MCF 10A (cell line): ENCODE measurements at regions of chr22 and their contacts with region 1.

Region 1: GRCh38 chr22:39502109-39502788 is at the start of gene MIEF1:
- DNase-seq: peak; percentile 96
- H3K4me3 Mint-ChIP-seq: peak within 1 kb of the TSS; percentile 79
- H3K27ac Mint-ChIP-seq: peak within 1 kb of the TSS; percentile 59
- H3K4me1 Mint-ChIP-seq: peaks cover 24% of the 10 kb centered on the region
- H3K27me3 Mint-ChIP-seq: no peaks in the 10 kb centered on the region
- CTCF ChIP-seq: no peak
- total RNA-seq, gene MIEF1: 37.0 and 40.2 TPM in 2 replicates

Region 2: GRCh38 chr22:39456262-39457197 is 45.7 kb before region 1 on chr22 and contains the start of gene MGAT3:
- CTCF ChIA-PET with region 1: no interaction called
- POLR2A ChIA-PET with region 1: no interaction called
- intact Hi-C with region 1: no loop called
- DNase-seq: no peak
- H3K4me3 Mint-ChIP-seq: no peak within 1 kb of the TSS
- H3K27ac Mint-ChIP-seq: no peak within 1 kb of the TSS
- H3K4me1 Mint-ChIP-seq: no peaks in the 10 kb centered on the region
- H3K27me3 Mint-ChIP-seq: peaks cover 28% of the 10 kb centered on the region
- CTCF ChIP-seq: no peak
- total RNA-seq, gene MGAT3: not detected in 2 replicates

Region 3: DNA sequence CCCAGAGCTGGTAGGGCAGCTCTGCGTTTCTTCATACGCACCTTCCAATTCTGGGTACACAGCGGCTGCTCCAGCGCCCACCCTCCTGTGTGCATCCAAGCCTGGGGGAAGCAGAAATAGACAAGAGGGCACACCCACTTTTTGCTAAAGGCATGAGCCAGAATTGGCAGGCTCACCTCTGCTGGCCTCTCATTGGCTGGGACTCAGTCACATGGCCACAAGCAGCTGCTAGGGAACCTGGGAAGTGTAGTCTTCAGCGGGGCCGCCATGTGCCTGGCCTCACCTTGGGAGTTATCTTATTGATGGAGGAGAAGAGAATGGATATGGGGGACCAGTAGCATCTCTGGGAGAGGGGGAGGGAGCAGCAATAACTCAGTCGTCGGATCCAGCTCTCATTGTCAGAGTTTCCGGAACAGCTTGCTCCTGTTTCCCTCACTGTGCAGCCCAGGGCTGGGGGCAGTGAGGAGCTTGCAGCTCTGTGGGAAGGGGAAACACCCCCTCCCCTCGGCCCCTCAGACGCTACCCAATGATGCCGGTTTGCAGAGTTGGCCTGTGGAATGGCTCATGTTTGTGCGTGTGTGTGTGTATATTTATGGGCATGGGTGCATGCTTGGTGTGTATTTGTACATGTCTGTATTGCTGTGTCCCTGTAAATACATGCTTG is 12.0 kb before region 1 on chr22:
- CTCF ChIA-PET with region 1: interaction called, 8 read pairs
- POLR2A ChIA-PET with region 1: interaction called, 10 read pairs
- intact Hi-C with region 1: no loop called
- DNase-seq: peak; percentile 86
- H3K4me3 Mint-ChIP-seq: no peak overlapping the region
- H3K27ac Mint-ChIP-seq: no peak overlapping the region
- H3K4me1 Mint-ChIP-seq: no peaks in the 10 kb centered on the region
- H3K27me3 Mint-ChIP-seq: no peaks in the 10 kb centered on the region
- CTCF ChIP-seq: no peak